ENCODE measurements at regions of chr7 and their contacts with region 1.

Region 1: DNA sequence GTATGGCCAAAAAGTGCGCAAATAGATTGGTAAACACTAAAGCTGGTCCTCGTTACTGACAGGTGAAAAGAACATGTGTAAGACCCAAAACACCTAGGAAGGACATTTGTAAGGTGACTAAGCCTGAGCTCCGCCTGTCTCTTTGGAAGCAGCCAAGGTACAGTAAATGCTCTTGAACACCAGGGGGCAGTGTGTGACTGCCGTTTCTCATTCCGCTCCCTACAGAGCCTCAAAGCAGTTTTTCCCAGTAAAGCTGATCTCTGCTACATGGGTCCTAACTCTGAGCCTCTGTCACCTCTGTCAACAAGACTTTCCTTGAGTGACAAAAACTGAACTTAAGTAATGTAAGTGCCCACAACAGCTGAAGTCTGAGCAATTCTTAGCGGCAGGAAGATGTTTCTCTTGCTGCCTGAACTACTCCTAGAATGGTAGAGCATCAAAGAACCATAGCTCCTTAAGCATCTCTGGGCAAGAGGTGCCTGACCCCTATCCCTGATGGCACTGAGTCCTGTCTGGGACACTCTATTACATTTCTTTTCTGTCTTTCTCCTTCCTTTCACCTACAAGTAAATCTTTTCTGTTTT is 238.0 kb upstream of the INHBA start:
- DNase-seq: peak; percentile 66
- H3K4me3 Mint-ChIP-seq: no peak overlapping the region
- H3K27ac Mint-ChIP-seq: no peak overlapping the region
- H3K4me1 Mint-ChIP-seq: peaks cover 5% of the 10 kb centered on the region
- H3K27me3 Mint-ChIP-seq: peaks cover 25% of the 10 kb centered on the region

Region 2: DNA sequence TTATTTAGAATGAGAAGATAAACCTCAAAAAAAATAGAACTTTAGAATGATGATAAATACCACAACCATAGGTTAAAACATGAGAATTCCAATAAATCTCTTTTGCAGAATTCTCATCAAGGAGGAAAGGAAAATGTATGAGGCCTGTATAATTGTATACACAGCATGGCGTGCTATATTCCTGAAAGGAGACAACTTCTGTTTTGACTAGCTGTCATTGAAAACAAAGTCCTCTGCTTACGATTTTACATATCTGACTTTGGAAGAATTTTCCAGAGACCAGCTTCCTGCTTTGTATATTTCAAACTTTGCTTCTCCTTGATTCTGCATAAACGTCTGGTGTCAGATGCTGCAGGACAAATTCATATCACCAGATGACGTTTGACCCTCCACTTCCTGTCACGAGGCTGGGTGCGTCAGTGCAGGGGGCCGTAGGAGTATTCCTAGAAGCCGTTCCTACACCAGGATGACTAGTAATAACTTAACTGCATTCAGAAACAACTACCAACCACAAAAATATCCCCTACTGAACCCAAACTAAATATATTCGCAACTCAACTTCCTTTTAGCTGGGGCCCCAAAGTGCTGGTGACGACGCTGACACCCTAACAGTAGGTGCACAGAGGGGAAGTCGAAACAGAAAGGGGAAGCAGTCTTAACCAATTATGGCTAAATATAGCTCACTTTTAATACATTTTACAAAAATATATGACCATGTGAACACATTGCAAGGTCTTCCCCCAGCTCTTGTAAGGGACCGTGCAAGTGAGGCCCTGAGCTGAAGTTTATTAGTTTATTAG is 59.3 kb before region 1 on chr7:
- CTCF ChIA-PET with region 1: interaction called, 14 read pairs
- POLR2A ChIA-PET with region 1: no interaction called
- intact Hi-C with region 1: no loop called
- DNase-seq: peak; percentile 91
- H3K4me3 Mint-ChIP-seq: peak overlapping the region; percentile 43
- H3K27ac Mint-ChIP-seq: peak overlapping the region; percentile 93
- H3K4me1 Mint-ChIP-seq: peaks cover 38% of the 10 kb centered on the region
- H3K27me3 Mint-ChIP-seq: peaks cover 1% of the 10 kb centered on the region

Region 3: GRCh38 chr7:41930538-41931262 is 10.2 kb before region 1 on chr7:
- CTCF ChIA-PET with region 1: interaction called, 11 read pairs
- POLR2A ChIA-PET with region 1: no interaction called
- intact Hi-C with region 1: no loop called
- DNase-seq: no peak
- H3K4me3 Mint-ChIP-seq: no peak overlapping the region
- H3K27ac Mint-ChIP-seq: no peak overlapping the region
- H3K4me1 Mint-ChIP-seq: no peaks in the 10 kb centered on the region
- H3K27me3 Mint-ChIP-seq: peaks cover 11% of the 10 kb centered on the region

Region 4: DNA sequence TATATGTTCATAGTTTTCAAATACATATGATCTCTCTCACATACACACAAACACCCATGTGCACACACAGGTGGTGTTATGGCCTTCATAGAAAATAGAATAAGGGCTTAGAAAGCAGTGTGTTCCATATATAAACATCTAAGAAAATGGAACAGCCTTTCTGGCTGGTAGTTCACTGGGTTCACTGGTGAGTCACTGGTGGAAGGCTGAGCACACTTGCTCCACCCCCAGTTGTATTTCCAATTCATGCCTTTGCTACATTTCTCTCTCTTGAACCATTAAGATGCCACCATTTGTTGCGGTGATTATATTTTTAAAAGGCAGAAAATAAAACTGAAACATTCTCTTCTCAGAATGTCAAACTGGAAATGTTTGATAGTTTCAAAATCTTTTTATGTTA is 44.0 kb after region 1 on chr7:
- CTCF ChIA-PET with region 1: interaction called, 10 read pairs
- POLR2A ChIA-PET with region 1: no interaction called
- intact Hi-C with region 1: no loop called
- DNase-seq: no peak
- H3K4me3 Mint-ChIP-seq: no peak overlapping the region
- H3K27ac Mint-ChIP-seq: no peak overlapping the region
- H3K4me1 Mint-ChIP-seq: no peaks in the 10 kb centered on the region
- H3K27me3 Mint-ChIP-seq: peaks cover 8% of the 10 kb centered on the region

Region 5: DNA sequence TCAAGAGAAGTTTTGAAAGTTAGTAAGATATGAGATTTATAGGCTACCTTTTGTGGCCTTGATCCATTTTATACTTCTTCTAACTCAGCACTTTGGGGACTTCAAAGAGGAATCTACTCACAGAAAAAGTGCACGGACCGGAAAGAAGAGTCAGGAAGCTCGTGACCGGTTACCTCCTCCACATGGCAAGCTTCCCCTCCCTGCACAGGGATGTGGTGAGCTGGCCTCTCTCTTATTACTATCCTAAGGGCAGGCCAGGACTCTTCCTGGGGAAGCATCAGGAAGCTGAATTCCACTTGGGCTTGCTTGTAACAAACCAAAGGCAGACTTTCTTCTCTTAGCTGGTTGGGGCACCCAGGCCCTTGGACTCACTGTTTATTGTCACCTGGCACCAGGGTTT is 467.0 kb after region 1 on chr7:
- CTCF ChIA-PET with region 1: no interaction called
- POLR2A ChIA-PET with region 1: no interaction called
- intact Hi-C with region 1: no loop called
- DNase-seq: no peak
- H3K4me3 Mint-ChIP-seq: no peak overlapping the region
- H3K27ac Mint-ChIP-seq: no peak overlapping the region
- H3K4me1 Mint-ChIP-seq: no peaks in the 10 kb centered on the region
- H3K27me3 Mint-ChIP-seq: no peaks in the 10 kb centered on the region

Region 6: DNA sequence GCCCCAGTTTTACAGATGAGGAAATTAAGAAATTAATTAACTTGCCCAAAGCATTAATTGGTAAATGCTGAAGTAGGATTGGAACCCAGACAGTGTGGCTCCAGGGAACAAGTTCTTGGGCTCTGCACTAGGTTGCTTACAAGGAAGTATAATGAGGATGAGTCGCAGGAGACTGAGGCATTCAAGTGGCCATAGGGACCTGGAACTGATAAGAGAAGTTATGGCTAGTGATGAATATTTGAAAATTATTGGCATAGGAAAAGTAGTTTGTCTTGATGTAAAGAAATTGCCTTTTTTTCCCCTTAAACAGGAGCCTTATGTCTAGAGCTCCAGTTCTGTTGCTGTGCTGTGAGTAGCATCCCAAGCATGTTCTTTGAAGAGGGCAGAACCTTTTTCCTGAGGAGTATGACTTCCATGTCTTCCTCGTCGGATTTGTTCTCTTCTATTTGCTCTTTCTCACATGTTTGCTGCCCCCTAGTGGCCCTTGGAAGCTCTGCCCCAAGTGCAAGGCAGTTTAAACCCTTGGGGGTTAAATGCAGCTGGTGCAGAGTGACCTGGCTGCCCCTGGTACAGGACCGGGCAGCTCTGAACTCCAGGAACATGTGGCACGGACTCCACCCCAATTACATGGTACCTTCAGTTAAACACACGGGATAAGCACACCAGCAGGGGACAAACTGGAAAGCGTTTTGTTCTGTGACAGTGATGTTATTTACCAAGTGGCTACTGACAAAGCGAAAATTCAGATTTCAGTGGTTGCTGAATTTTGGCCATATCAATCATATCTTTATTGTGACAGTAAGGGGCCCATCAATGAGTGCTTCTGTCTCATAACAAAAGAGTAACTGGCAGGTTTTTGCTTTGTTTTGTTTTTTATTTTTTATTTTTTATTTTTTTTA is 1320.4 kb after region 1 on chr7:
- CTCF ChIA-PET with region 1: interaction called, 9 read pairs
- POLR2A ChIA-PET with region 1: no interaction called
- intact Hi-C with region 1: loop called (anchors 5 kb)
- DNase-seq: peak; percentile 76
- H3K4me3 Mint-ChIP-seq: no peak overlapping the region
- H3K27ac Mint-ChIP-seq: no peak overlapping the region
- H3K4me1 Mint-ChIP-seq: no peaks in the 10 kb centered on the region
- H3K27me3 Mint-ChIP-seq: peaks cover 11% of the 10 kb centered on the region

Measured in activated CD4-positive, alpha-beta memory T cell treated with anti-CD3 and anti-CD28 coated beads for 36 hours (primary cell).